Esophagus muscularis mucosa (tissue), 4 donors: ENCODE measurements at regions of chr7 and their contacts with region 1.

Region 1: GRCh38 chr7:137898839-137899721 is 52.3 kb upstream of the DGKI start:
- DNase-seq: no peak
- H3K4me3 ChIP-seq: peak overlapping the region in 1 of 4 donors; percentile 20
- H3K27ac ChIP-seq: peak overlapping the region in 2 of 4 donors; percentile 38 to 46
- H3K4me1 ChIP-seq: peaks cover 14 to 31% (median 28%) of the 10 kb centered on the region in 4 donors
- H3K27me3 ChIP-seq: no peaks in the 10 kb centered on the region
- CTCF ChIP-seq: peak; percentile 89 to 94 (median 90)
- EP300 ChIP-seq: no peak
- POLR2A ChIP-seq: no peak

Region 2: DNA sequence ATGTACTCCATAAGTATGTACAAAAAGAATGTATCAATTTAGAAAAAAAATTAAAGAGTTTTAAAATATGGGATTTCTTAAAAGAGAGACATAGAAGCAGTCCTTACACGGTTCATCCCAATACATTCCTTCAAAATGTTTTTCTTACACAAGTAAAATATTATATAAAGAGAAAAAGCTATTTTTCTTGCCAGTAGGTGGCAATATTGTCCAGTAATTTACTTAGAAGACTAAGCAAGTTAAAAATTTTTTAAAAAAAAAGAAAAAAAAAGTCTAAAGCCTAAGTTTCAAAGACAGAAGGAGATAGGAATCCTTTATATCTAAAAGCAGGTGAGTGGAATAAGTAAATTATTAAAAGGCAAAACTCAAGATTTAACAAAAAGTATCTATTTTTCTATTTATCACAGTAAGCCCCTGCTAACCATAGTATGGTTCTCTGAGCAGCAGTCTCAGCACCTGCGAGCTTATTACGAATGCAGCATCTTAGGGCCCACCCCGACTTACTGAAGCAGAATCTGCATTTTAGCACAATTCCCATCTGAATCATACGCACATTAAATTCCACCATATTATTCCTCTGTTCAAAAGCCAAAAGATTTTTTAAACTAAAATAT is 292.9 kb before region 1 on chr7:
- intact Hi-C with region 1: loop called (anchors 5 kb)
- DNase-seq: no peak
- H3K4me3 ChIP-seq: no peak overlapping the region
- H3K27ac ChIP-seq: no peak overlapping the region
- H3K4me1 ChIP-seq: no peaks in the 10 kb centered on the region
- H3K27me3 ChIP-seq: no peaks in the 10 kb centered on the region
- CTCF ChIP-seq: peak; percentile 31 to 60 (median 59)
- EP300 ChIP-seq: no peak
- POLR2A ChIP-seq: no peak

Region 3: DNA sequence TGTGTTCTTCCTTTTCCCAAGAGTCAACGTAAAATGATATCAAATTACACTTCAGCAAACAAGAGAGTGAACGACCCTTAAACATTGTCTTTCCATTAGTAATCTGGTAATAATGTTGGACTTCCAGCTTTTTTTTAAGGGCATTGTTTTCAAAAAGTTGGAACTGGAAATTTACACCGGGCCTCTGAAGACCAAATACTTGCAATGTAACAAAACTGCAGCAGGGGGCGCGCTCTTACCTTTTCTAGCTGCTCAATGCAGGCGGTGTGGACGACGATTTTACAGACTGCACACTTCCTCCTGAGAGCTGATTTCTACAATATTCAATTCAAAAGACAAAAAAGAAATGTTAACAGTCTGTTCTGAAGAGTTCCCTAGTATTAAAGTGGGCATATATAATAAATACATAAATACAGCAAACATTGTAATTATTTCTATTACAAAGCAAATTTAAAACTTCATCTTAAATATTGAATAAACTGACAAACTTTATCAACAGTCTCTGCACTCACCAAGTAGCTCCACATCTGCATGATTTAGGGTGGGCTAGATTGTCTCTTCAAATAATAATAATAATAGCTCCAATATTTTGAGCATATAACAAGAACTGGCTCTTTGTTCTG is 242.7 kb before region 1 on chr7:
- intact Hi-C with region 1: loop called (anchors 2 kb)
- DNase-seq: no peak
- H3K4me3 ChIP-seq: no peak overlapping the region
- H3K27ac ChIP-seq: no peak overlapping the region
- H3K4me1 ChIP-seq: peaks cover 4 to 21% (median 9%) of the 10 kb centered on the region in 4 donors
- H3K27me3 ChIP-seq: no peaks in the 10 kb centered on the region
- CTCF ChIP-seq: peak; percentile 78 to 85 (median 84)
- EP300 ChIP-seq: no peak
- POLR2A ChIP-seq: no peak

Region 4: DNA sequence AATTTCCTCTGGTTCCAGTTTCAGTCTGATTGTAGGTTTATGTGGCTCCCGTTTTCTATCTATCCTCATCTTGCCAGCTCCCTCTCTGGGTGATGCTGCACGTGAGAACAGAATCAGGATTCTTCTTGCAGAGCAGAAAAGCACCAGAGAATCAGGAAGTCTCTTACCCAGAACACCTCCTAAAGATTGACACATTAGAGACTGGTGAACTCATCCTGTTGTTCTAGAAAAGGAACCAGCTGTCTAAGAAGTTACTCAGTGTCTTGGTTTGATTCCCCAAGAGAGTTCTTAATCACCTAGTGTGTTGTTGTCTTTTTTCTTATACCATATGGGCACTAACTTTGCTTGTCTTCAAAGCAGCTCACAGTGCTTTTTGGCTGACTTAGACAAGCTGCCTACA is 204.7 kb before region 1 on chr7:
- intact Hi-C with region 1: no loop called
- DNase-seq: no peak
- H3K4me3 ChIP-seq: no peak overlapping the region
- H3K27ac ChIP-seq: no peak overlapping the region
- H3K4me1 ChIP-seq: no peaks in the 10 kb centered on the region
- H3K27me3 ChIP-seq: no peaks in the 10 kb centered on the region
- CTCF ChIP-seq: no peak
- EP300 ChIP-seq: no peak
- POLR2A ChIP-seq: no peak

Region 5: DNA sequence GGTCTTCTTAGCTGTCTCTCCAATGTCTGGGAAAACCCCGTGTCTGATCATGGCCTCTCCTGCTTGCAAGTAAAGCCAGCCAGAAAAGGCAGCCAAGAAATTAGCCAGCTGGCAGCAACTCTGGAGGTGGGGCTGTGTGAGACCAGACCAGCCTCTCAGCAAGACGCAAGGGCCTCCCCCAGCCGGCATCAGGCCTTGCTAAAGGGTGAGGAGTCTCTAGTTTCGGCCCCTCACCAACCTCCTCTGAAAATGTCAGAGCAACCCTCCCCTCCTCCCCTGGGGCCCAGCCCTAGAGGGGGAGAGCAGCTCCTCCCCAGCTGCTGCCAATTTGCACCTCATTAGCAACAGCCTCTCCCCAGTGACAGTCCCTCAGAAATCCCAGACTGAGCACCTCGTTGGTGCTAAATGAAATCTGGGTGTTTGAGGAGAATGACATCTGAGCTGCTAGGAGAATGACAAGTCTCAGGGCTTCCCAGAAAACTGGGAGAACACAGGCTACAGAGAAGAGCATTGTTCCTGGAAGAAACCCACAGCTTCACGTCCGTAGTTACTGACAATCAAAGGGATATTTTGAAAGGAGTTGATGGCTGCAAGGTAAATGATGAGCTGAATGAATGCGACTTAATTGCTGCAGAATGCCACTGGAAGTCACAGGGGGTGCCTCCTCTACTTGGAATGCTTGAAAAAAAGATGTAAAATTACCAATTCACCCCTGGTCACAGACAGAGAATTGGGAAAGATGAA is 78.2 kb before region 1 on chr7:
- intact Hi-C with region 1: loop called (anchors 2 kb)
- DNase-seq: no peak
- H3K4me3 ChIP-seq: peak overlapping the region in 1 of 4 donors; percentile 5
- H3K27ac ChIP-seq: peak overlapping the region in 1 of 4 donors; percentile 44
- H3K4me1 ChIP-seq: peaks cover 9 to 16% (median 12%) of the 10 kb centered on the region in 4 donors
- H3K27me3 ChIP-seq: no peaks in the 10 kb centered on the region
- CTCF ChIP-seq: no peak
- EP300 ChIP-seq: no peak
- POLR2A ChIP-seq: no peak

Region 6: DNA sequence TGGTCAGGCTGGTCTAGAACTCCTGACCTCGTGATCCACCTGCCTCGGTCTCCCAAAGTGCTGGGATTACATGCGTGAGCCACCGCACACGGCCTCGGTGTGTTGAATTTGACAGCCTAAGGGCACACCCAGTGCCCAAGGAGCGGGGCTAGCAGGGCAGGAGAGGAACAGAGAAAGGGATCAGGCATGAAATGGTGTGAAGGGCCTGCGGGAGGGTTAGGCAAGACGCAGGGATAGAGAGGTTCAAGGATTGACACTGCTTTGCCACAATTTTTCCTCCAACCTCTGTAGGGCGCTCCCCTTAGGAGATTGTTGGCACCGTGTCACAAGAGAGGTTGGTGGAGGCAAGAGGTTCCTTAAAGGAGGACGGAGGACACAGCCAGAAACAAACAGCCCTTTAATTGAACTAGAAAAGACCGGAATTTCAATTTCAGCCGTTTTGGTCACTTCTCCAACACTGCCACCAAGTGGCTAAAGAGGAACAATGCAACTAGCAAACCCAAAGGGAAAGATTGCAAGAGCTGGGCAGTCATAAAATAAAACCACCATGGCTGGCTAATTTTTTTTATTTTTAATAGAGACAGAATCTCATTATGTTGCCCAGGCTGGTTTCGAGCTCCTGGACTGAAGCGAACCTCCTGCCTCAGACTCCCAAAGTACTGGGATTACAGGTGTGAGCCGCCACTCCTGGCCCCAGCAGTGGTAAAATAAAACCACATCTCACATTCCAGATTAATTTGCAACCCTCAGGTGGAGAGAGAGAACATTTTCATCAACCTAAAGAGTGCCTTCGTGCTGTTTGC is 109.7 kb after region 1 on chr7:
- intact Hi-C with region 1: loop called (anchors 1 kb)
- DNase-seq: no peak
- H3K4me3 ChIP-seq: peak overlapping the region in 1 of 4 donors; percentile 21
- H3K27ac ChIP-seq: no peak overlapping the region
- H3K4me1 ChIP-seq: peaks cover 0 to 13% (median 8%) of the 10 kb centered on the region in 4 donors
- H3K27me3 ChIP-seq: no peaks in the 10 kb centered on the region
- CTCF ChIP-seq: peak; percentile 89 to 97 (median 94)
- EP300 ChIP-seq: no peak
- POLR2A ChIP-seq: no peak